CD4-positive, alpha-beta memory T cell (primary cell): ENCODE measurements at regions of chr20 and their contacts with region 1.

Region 1: GRCh38 chr20:50101281-50101680 is 11.7 kb downstream of the UBE2V1 start:
- DNase-seq: no peak
- H3K4me3 ChIP-seq: no peak overlapping the region
- H3K4me3 Mint-ChIP-seq: peak overlapping the region in 1 of 8 donors; percentile 61
- H3K27ac ChIP-seq: no peak overlapping the region
- H3K27ac Mint-ChIP-seq: peak overlapping the region in 4 of 7 donors; percentile 30 to 86 (median 42)
- H3K4me1 ChIP-seq: peaks cover 71% of the 10 kb centered on the region
- H3K4me1 Mint-ChIP-seq: peaks cover 40 to 68% (median 53%) of the 10 kb centered on the region in 4 donors
- H3K27me3 ChIP-seq: no peaks in the 10 kb centered on the region
- H3K27me3 Mint-ChIP-seq: no peaks in the 10 kb centered on the region

Region 2: GRCh38 chr20:49936153-49937027 is 164.9 kb before region 1 on chr20 and contains the start of gene RNF114:
- CTCF ChIA-PET with region 1: no interaction called
- POLR2A ChIA-PET with region 1: no interaction called
- intact Hi-C with region 1: no loop called
- DNase-seq: peak; percentile 85 to 87 (median 86)
- H3K4me3 ChIP-seq: peak within 1 kb of the TSS; percentile 88 to 100
- H3K4me3 Mint-ChIP-seq: peak within 1 kb of the TSS; percentile 97 to 99 (median 98)
- H3K27ac ChIP-seq: peak within 1 kb of the TSS; percentile 88
- H3K27ac Mint-ChIP-seq: peak within 1 kb of the TSS; percentile 83 to 98 (median 95)
- H3K4me1 ChIP-seq: peaks cover 40% of the 10 kb centered on the region
- H3K4me1 Mint-ChIP-seq: peaks cover 38 to 50% (median 43%) of the 10 kb centered on the region in 4 donors
- H3K27me3 ChIP-seq: no peaks in the 10 kb centered on the region
- H3K27me3 Mint-ChIP-seq: no peaks in the 10 kb centered on the region
- total RNA-seq, gene RNF114: 96.3 to 101 TPM

Region 3: GRCh38 chr20:50085452-50086365 is 15.6 kb before region 1 on chr20:
- CTCF ChIA-PET with region 1: interaction called, 22 read pairs
- POLR2A ChIA-PET with region 1: interaction called, 8 read pairs
- intact Hi-C with region 1: no loop called
- DNase-seq: peak; percentile 39 to 53 (median 47)
- H3K4me3 ChIP-seq: peak overlapping the region in 1 of 2 donors; percentile 17
- H3K4me3 Mint-ChIP-seq: peak overlapping the region; percentile 82 to 91 (median 84)
- H3K27ac ChIP-seq: peak overlapping the region; percentile 27
- H3K27ac Mint-ChIP-seq: peak overlapping the region; percentile 44 to 92 (median 77)
- H3K4me1 ChIP-seq: peaks cover 17% of the 10 kb centered on the region
- H3K4me1 Mint-ChIP-seq: peaks cover 18 to 40% (median 28%) of the 10 kb centered on the region in 4 donors
- H3K27me3 ChIP-seq: no peaks in the 10 kb centered on the region
- H3K27me3 Mint-ChIP-seq: no peaks in the 10 kb centered on the region